Lower leg skin (tissue), 4 donors: ENCODE measurements at regions of chr3 and their contacts with region 1.

Region 1: GRCh38 chr3:49839193-49839809 is 17.1 kb downstream of the TRAIP start:
- DNase-seq: peak; percentile 77 to 95
- H3K4me3 ChIP-seq: no peak overlapping the region
- CTCF ChIP-seq: no peak
- POLR2A ChIP-seq: no peak

Region 2: GRCh38 chr3:48694610-48695392 is 1144.5 kb before region 1 on chr3:
- intact Hi-C with region 1: no loop called
- DNase-seq: peak; percentile 79 to 95
- H3K4me3 ChIP-seq: peak overlapping the region; percentile 29
- CTCF ChIP-seq: no peak
- POLR2A ChIP-seq: no peak

Region 3: DNA sequence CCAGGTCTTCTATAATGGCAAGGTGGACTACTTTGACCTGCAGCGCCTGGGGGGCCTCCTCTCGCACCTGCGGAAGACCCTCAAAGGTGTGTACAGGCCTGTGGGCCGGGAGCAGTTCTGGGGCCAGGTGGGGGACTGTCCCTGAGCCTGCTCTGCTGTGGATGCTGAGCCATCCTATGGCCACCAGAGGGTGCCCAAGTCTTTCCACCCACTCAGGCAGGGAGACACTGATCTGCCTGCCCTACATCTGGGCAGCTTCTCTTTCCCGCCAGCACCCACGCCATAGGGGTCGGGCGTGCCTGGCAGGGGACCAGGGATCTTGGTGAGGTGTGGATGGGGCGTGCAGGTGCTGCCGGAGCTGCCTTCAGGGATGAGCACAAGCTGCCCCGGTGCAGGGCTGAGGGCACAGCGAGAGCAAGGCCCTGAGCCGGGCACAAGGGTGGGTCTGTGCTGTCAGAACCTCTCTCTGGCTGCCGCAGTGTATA is 135.8 kb before region 1 on chr3:
- intact Hi-C with region 1: loop called (anchors 5 kb)
- DNase-seq: no peak
- H3K4me3 ChIP-seq: no peak overlapping the region
- CTCF ChIP-seq: peak in 1 of 3 donors; percentile 43
- POLR2A ChIP-seq: no peak

Region 4: DNA sequence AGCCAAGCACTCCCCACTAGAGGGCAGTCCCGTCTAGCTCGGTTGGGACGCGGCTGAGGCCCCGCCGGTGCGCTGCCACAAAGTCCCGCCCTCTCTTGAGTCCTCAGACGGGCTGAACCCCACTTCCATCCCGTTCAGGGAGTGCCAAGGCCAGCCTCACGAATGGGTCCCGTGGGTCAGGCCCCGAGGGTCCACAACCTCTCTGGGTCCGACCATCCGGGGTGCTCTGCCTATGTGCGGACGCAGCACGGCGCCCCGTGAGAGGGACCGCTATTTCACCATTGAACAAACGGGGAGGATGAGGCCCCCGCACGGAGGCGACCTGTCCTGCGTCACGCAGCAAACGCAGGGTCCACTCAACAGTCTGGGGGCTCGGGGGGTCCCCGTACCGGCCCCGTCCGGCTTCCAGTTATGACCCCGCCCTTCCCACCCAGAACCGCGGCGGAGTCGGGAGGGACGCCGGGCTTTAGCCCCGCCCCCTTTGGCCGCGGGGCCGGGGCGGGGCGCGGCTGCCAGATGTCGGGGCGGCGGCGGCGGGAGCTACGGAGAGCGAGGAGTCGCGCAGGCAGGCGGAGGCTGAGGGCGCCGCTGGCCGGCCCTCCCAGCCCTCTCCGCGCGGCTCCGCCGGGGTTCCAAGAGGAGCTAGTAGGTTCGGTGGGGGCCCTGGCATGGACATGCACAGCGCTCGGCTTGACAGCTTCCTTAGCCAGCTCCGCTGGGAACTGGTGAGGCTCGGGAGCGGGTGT is 36.4 kb before region 1 on chr3 and contains the start of gene INKA1:
- intact Hi-C with region 1: loop called (anchors 5 kb)
- DNase-seq: peak; percentile 88 to 98
- H3K4me3 ChIP-seq: peak within 1 kb of the TSS; percentile 76
- CTCF ChIP-seq: peak in 1 of 3 donors; percentile 83
- POLR2A ChIP-seq: no peak
- total RNA-seq, gene INKA1: 30.4 to 56.1 (median 37.9) TPM